ENCODE measurements at regions of chr11 and their contacts with region 1.

Region 1: DNA sequence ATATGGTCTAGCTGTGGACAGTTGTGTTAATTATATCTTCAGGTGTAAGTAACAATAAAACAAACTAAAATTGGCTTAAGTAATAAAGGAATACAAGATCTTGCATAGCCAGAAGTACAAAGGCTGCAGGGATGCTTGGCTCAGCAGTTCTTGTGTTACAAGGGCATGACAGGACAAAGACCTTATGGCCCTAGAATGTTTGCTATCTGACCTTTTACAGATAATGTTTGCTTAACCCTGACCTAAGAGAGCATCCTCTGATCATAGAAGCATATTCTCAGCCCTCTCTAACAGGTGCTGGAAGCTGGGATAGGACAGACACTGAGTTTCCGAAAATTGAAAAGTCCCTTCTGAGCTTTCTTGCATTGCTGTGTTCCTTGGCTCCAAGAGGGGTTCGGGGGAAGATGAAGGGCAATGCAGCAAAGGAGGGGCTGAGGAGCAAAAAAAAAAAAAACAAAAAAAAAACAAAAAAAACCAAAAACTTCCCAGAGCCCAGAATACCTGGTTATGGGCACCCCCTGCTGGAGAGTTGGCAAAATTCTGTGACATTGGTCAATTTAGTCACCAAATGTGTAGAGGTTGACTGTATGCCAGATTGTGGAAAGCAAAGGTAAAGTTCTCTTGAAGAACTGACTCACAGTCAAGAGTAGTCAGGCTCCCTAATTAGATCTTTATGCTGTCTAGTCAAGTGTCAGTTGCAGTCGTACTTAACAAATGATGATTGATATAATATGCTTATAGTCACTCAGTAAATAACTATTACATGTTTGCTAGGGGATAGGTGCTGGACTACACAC is 10.4 kb upstream of the HIKESHI start:
- DNase-seq: peak; percentile 39
- ATAC-seq: peak; percentile 74
- H3K4me3 ChIP-seq: no peak overlapping the region
- H3K27ac ChIP-seq: no peak overlapping the region
- H3K4me1 ChIP-seq: no peaks in the 10 kb centered on the region
- H3K27me3 ChIP-seq: no peaks in the 10 kb centered on the region
- CTCF ChIP-seq: peak; percentile 76 to 86 (median 77)
- POLR2A ChIP-seq: no peak
- RAD21 ChIP-seq: peak; percentile 85

Region 2: DNA sequence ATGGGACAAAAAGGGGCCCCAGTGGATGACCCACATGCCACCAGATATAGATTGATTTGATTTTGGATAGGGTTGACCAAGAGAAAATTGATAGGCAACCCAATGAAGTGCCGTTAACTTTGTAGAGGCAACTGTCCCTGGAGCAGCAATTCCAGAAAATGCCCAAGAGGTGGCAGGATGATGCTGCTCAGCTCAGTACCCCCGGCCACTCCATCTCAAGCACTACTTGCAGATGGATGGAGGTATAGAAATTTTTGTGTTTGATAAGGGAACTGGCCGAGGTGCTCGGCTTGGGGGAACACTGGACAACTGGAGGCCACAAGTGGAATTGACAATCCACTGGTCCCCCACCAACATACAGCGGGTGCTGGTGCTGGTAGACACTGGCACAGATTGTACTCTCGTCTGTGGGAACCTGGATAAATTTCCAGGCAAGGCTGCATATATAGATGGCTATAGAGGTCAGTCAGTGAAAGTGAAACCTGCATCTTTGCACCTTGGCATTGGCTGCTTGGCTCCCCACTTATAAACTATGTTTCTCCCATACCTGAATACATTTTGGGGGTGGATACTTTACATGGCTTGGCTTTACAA is 350.2 kb before region 1 on chr11:
- CTCF ChIA-PET with region 1: interaction called, 4 read pairs
- POLR2A ChIA-PET with region 1: no interaction called
- RAD21 ChIA-PET with region 1: no interaction called
- intact Hi-C with region 1: loop called (anchors 1 kb)
- DNase-seq: no peak
- ATAC-seq: peak; percentile 80
- H3K4me3 ChIP-seq: no peak overlapping the region
- H3K27ac ChIP-seq: no peak overlapping the region
- H3K4me1 ChIP-seq: no peaks in the 10 kb centered on the region
- H3K27me3 ChIP-seq: no peaks in the 10 kb centered on the region
- CTCF ChIP-seq: peak; percentile 47 to 59 (median 53); a peak in 5 of 6 replicates
- POLR2A ChIP-seq: no peak
- RAD21 ChIP-seq: peak; percentile 75